Sigmoid colon (tissue), 7 donors: ENCODE measurements at regions of chr2 and their contacts with region 1.

Region 1: GRCh38 chr2:129877289-129877779 is 102.1 kb upstream of the RAB6C start:
- DNase-seq: peak; percentile 96
- H3K4me3 ChIP-seq: peak overlapping the region; percentile 69 to 77 (median 71)
- H3K27ac ChIP-seq: peak overlapping the region; percentile 82 to 91 (median 85)
- H3K4me1 ChIP-seq: peaks cover 0 to 16% (median 10%) of the 10 kb centered on the region in 4 donors
- H3K27me3 ChIP-seq: no peaks in the 10 kb centered on the region
- CTCF ChIP-seq: no peak
- EP300 ChIP-seq: no peak
- POLR2A ChIP-seq: no peak

Region 2: DNA sequence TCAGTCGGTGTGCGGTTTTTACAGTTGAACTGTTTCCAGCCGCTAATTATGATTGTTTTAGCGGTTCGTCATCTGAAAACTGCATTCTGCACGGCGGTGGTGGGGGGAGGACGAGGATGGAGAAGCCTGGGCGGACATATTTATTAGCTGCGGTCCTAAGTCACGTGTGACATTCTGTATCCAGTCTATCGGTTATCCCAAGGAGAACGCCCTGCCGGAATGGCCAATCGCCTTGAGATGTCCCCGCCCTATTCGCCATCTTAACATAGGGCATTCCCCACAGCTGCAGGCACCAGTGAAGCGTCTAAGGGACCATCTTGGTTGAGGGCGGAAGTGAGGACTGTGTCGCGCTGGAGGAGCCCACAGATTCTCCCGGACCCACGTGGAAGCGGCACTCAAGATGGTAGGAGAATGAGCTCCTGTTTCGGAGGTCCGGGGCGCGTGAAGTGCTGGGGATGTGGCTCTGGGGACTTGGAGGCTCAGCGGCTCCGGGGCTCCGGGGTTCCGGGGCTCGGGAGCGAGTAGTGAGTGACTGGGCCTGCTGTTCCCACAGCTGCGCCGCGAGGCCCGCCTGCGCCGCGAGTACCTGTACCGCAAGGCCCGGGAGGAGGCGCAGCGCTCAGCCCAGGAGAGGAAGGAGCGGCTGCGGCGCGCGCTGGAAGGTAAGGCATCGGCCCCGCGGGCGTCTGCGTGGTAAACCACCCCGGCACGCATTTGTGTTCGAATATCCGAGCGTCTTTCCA is 465.4 kb after region 1 on chr2 and contains the start of gene IMP4:
- intact Hi-C with region 1: loop called (anchors 5 kb)
- DNase-seq: peak; percentile 99
- H3K4me3 ChIP-seq: peak within 1 kb of the TSS; percentile 58 to 87 (median 80)
- H3K27ac ChIP-seq: peak within 1 kb of the TSS; percentile 91 to 96 (median 92)
- H3K4me1 ChIP-seq: peaks cover 0 to 25% (median 23%) of the 10 kb centered on the region in 4 donors
- H3K27me3 ChIP-seq: no peaks in the 10 kb centered on the region
- CTCF ChIP-seq: peak in 3 of 4 experiments; percentile 17 to 29 (median 20)
- EP300 ChIP-seq: no peak
- POLR2A ChIP-seq: no peak
- total RNA-seq, gene IMP4: 71.2 to 130 (median 81.2) TPM